ENCODE measurements at regions of chr13 and their contacts with region 1.

Region 1: GRCh38 chr13:29935309-29935981 is 85.0 kb upstream of the UBL3 start:
- DNase-seq: peak; percentile 46 to 89 (median 75)
- H3K4me3 ChIP-seq: peak overlapping the region; percentile 66
- H3K4me3 Mint-ChIP-seq: peak overlapping the region; percentile 69 to 94 (median 87)
- H3K27ac ChIP-seq: no peak overlapping the region
- H3K27ac Mint-ChIP-seq: peak overlapping the region; percentile 51 to 94 (median 86)
- H3K4me1 ChIP-seq: peaks cover 46% of the 10 kb centered on the region
- H3K4me1 Mint-ChIP-seq: peaks cover 45 to 65% (median 65%) of the 10 kb centered on the region in 3 donors
- H3K27me3 ChIP-seq: no peaks in the 10 kb centered on the region
- H3K27me3 Mint-ChIP-seq: no peaks in the 10 kb centered on the region

Region 2: DNA sequence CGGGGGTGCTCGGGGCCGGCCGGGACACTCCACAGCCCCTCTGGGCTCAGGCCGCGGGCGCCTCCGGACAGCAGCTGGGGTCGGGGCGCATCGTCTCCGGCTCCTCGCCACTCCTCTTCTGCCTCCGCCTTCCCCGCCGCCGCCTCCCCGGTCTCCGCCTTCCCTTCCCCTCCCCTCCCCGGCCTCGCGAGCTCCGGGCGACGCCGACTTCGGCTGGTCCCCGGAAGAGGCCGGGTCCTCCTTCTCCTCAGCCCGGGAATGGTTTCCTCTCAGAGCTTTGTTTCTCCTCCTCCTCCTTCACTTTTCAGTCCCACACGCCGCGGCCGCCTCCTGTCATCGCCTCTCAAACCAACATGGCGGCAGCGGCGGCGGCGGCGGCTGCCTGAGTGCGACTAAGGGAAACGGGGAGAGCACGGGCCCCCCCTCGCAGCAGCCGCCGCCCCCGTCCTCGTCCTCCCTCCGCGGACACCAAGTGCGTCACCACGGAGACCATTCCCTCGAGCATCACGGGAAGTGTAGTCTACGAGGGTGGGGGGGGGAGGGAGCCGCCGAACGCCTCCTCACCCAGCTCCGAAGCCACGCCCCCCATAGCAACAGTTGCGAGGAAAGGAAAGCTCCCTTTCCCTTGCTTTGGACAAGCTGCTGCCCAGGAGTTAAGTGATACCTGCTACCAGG is 85.1 kb before region 1 on chr13 and contains the start of gene UBL3:
- CTCF ChIA-PET with region 1: interaction called, 22 read pairs
- POLR2A ChIA-PET with region 1: interaction called, 41 read pairs
- DNase-seq: peak; percentile 88 to 96 (median 91)
- H3K4me3 ChIP-seq: peak within 1 kb of the TSS; percentile 81
- H3K4me3 Mint-ChIP-seq: peak within 1 kb of the TSS; percentile 90 to 100 (median 98)
- H3K27ac ChIP-seq: peak within 1 kb of the TSS; percentile 90
- H3K27ac Mint-ChIP-seq: peak within 1 kb of the TSS; percentile 91 to 100 (median 99)
- H3K4me1 ChIP-seq: peaks cover 13% of the 10 kb centered on the region
- H3K4me1 Mint-ChIP-seq: peaks cover 30 to 34% (median 30%) of the 10 kb centered on the region in 3 donors
- H3K27me3 ChIP-seq: no peaks in the 10 kb centered on the region
- H3K27me3 Mint-ChIP-seq: peaks cover 0 to 2% of the 10 kb centered on the region in 2 donors
- total RNA-seq, gene UBL3: 15.0 to 15.2 TPM

Region 3: DNA sequence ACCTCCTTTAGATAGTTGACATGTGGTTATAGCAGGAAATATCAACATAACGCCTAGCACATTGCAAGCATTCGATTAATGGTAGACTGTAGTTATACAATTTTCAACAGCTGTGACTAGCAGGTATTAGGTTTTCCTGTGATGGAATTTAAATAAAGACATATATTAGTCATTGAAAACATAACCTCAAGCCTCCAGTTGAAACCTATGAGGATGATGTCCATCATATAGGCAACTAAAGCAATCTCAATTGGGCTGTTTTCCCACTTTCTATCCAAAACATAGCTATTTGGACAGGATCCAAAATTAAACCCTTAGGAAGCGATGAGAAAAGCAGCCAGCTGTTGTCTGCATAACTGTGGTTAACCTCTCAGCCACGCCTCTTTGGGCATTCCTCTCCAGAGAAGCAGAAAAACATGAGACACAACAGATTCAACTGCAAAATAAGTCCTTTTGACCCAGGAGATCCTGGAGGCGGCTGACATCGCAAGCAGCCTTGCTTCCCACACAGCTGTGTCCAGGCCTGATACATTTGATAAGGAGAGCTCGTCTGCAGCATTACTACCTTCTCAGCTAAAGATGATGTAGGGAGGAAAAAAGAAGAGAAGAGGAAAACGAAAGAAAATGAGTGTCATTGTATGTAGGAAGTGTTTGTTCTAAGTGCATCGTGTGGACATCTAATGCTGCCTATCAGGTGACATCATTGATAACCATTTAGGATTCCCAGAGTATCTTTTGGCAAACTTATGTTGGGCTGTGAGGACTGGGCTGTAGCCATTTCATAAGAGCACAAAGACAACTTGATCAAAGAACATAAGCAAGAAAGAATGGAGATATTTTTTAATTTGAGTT is 33.1 kb before region 1 on chr13:
- CTCF ChIA-PET with region 1: interaction called, 11 read pairs
- POLR2A ChIA-PET with region 1: interaction called, 19 read pairs
- DNase-seq: peak; percentile 11 to 65 (median 15)
- H3K4me3 ChIP-seq: peak overlapping the region; percentile 47
- H3K4me3 Mint-ChIP-seq: peak overlapping the region; percentile 53 to 93 (median 90)
- H3K27ac ChIP-seq: no peak overlapping the region
- H3K27ac Mint-ChIP-seq: peak overlapping the region; percentile 43 to 99 (median 93)
- H3K4me1 ChIP-seq: peaks cover 19% of the 10 kb centered on the region
- H3K4me1 Mint-ChIP-seq: peaks cover 29 to 34% (median 30%) of the 10 kb centered on the region in 3 donors
- H3K27me3 ChIP-seq: no peaks in the 10 kb centered on the region
- H3K27me3 Mint-ChIP-seq: no peaks in the 10 kb centered on the region

Region 4: DNA sequence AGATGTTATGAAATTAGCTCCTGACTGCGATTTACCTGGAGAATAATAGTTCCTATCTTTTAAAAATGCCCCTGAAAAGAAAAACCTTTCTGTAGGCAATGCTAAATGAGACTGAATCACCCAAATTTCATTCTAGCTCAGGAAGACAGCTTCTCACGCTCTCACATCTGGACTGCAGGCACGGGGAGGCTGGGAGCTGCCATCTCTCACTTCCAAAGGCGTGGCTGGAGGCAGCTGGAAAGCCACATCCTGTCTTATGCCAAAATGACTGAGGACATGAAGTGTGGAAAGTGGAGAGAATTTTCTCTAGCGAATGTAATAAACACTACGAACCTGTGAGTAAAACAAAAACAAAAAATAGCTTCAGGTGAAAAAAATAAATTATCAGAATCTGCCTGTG is 27.0 kb before region 1 on chr13:
- CTCF ChIA-PET with region 1: interaction called, 11 read pairs
- POLR2A ChIA-PET with region 1: interaction called, 19 read pairs
- DNase-seq: no peak
- H3K4me3 ChIP-seq: no peak overlapping the region
- H3K4me3 Mint-ChIP-seq: no peak overlapping the region
- H3K27ac ChIP-seq: no peak overlapping the region
- H3K27ac Mint-ChIP-seq: no peak overlapping the region
- H3K4me1 ChIP-seq: no peaks in the 10 kb centered on the region
- H3K4me1 Mint-ChIP-seq: peaks cover 7 to 8% (median 8%) of the 10 kb centered on the region in 3 donors
- H3K27me3 ChIP-seq: no peaks in the 10 kb centered on the region
- H3K27me3 Mint-ChIP-seq: no peaks in the 10 kb centered on the region

Region 5: GRCh38 chr13:29923554-29924481 is 11.6 kb before region 1 on chr13:
- CTCF ChIA-PET with region 1: interaction called, 85 read pairs
- POLR2A ChIA-PET with region 1: interaction called, 3 read pairs
- DNase-seq: peak; percentile 23 to 74 (median 39)
- H3K4me3 ChIP-seq: no peak overlapping the region
- H3K4me3 Mint-ChIP-seq: peak overlapping the region in 1 of 7 donors; percentile 18
- H3K27ac ChIP-seq: no peak overlapping the region
- H3K27ac Mint-ChIP-seq: no peak overlapping the region
- H3K4me1 ChIP-seq: peaks cover 5% of the 10 kb centered on the region
- H3K4me1 Mint-ChIP-seq: peaks cover 7 to 52% (median 25%) of the 10 kb centered on the region in 3 donors
- H3K27me3 ChIP-seq: no peaks in the 10 kb centered on the region
- H3K27me3 Mint-ChIP-seq: peaks cover 0 to 2% of the 10 kb centered on the region in 2 donors

Region 6: GRCh38 chr13:29954082-29955028 is 18.9 kb after region 1 on chr13:
- CTCF ChIA-PET with region 1: interaction called, 59 read pairs
- POLR2A ChIA-PET with region 1: interaction called, 14 read pairs
- DNase-seq: peak; percentile 23 to 74 (median 55)
- H3K4me3 ChIP-seq: peak overlapping the region; percentile 40
- H3K4me3 Mint-ChIP-seq: peak overlapping the region; percentile 25 to 91 (median 84)
- H3K27ac ChIP-seq: no peak overlapping the region
- H3K27ac Mint-ChIP-seq: peak overlapping the region; percentile 41 to 94 (median 85)
- H3K4me1 ChIP-seq: peaks cover 44% of the 10 kb centered on the region
- H3K4me1 Mint-ChIP-seq: peaks cover 41 to 66% (median 53%) of the 10 kb centered on the region in 3 donors
- H3K27me3 ChIP-seq: no peaks in the 10 kb centered on the region
- H3K27me3 Mint-ChIP-seq: peaks cover 0 to 3% of the 10 kb centered on the region in 2 donors

Measured in CD8-positive, alpha-beta memory T cell (primary cell).